ENCODE measurements at regions of chr13 and their contacts with region 1.

Region 1: DNA sequence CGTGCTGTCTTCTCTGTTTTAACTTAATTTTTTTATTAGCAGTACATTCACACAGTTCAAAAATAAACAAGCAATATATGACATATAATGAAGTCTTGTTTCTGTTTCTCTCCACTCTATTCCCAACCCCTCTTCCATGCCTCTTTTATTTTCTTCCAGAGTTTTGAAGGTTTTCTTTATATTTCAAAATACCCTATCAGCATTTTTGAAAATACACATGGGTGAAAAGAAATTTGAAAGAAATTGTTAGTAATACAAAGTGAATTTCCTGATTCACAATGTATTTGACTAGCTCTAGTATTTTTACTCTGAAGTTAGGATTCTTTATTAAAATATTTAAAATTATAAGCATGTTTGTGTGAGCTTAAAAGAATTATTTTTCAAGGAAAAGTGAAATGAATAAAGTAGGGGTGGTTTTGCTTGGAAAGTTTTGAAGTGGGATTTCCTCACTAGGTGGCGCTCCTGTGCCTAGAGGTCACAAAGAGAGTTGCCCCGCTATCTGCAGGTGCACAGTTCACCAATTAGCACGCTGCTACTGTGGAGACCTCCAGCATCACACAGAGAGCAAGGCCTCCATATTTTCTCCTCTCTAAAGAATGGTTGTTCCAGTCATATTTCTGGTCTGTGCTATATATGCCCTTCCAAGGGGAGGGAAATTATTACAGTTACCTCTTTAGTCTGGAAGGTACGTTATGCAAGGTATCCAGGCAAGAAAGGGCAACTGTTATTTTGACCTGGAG is 37.6 kb downstream of the SOX21 start:
- DNase-seq: peak; percentile 46
- H3K4me3 ChIP-seq: no peak overlapping the region
- H3K27ac ChIP-seq: no peak overlapping the region
- H3K4me1 ChIP-seq: no peaks in the 10 kb centered on the region
- H3K27me3 ChIP-seq: peaks cover 17% of the 10 kb centered on the region
- CTCF ChIP-seq: peak; percentile 35 to 62 (median 56)
- EP300 ChIP-seq: no peak
- POLR2A ChIP-seq: no peak

Region 2: DNA sequence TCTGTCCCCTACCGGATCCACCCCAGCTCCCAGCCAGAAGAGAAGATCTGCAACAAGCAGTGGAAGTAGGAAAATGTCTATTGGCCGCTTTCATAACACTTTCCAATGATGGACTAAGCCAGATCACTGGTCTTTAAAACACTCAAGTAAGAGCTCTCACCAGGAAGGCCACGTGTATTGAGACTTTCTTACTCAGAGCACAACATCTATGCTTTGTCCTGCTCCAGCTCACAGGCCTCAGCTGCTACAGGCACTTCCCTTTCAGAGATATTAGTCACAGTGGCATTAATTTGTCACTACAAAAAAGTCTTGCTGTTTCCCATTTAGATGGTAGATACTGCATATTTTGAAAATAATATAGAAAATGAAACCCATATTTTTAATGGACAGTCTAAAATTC is 462.3 kb after region 1 on chr13:
- in situ Hi-C with region 1: loop called in 1 of 4 experiments (anchors 25 kb)
- intact Hi-C with region 1: no loop called
- DNase-seq: no peak
- H3K4me3 ChIP-seq: no peak overlapping the region
- H3K27ac ChIP-seq: no peak overlapping the region
- H3K4me1 ChIP-seq: no peaks in the 10 kb centered on the region
- H3K27me3 ChIP-seq: no peaks in the 10 kb centered on the region
- CTCF ChIP-seq: no peak
- EP300 ChIP-seq: no peak
- POLR2A ChIP-seq: no peak

Region 3: GRCh38 chr13:95156208-95156607 is 481.4 kb after region 1 on chr13:
- in situ Hi-C with region 1: loop called in 1 of 4 experiments (anchors 25 kb)
- intact Hi-C with region 1: no loop called
- DNase-seq: no peak
- H3K4me3 ChIP-seq: no peak overlapping the region
- H3K27ac ChIP-seq: no peak overlapping the region
- H3K4me1 ChIP-seq: peaks cover 0 to 12% (median 2%) of the 10 kb centered on the region in 4 donors
- H3K27me3 ChIP-seq: no peaks in the 10 kb centered on the region
- CTCF ChIP-seq: peak in 2 of 5 experiments; percentile 8 to 19
- EP300 ChIP-seq: no peak
- POLR2A ChIP-seq: no peak

Region 4: GRCh38 chr13:95403828-95404522 is 729.2 kb after region 1 on chr13:
- in situ Hi-C with region 1: loop called in 1 of 4 experiments (anchors 25 kb)
- intact Hi-C with region 1: no loop called
- DNase-seq: peak; percentile 81
- H3K4me3 ChIP-seq: peak overlapping the region in 3 of 4 donors; percentile 9 to 40 (median 22)
- H3K27ac ChIP-seq: no peak overlapping the region
- H3K4me1 ChIP-seq: peaks cover 0 to 7% (median 6%) of the 10 kb centered on the region in 4 donors
- H3K27me3 ChIP-seq: peaks cover 4% of the 10 kb centered on the region
- CTCF ChIP-seq: peak; percentile 92 to 93 (median 93)
- EP300 ChIP-seq: no peak
- POLR2A ChIP-seq: no peak

Measured in transverse colon (tissue), 4 donors.